CD4-positive, alpha-beta memory T cell (primary cell): ENCODE measurements at regions of chr9 and their contacts with region 1.

Region 1: DNA sequence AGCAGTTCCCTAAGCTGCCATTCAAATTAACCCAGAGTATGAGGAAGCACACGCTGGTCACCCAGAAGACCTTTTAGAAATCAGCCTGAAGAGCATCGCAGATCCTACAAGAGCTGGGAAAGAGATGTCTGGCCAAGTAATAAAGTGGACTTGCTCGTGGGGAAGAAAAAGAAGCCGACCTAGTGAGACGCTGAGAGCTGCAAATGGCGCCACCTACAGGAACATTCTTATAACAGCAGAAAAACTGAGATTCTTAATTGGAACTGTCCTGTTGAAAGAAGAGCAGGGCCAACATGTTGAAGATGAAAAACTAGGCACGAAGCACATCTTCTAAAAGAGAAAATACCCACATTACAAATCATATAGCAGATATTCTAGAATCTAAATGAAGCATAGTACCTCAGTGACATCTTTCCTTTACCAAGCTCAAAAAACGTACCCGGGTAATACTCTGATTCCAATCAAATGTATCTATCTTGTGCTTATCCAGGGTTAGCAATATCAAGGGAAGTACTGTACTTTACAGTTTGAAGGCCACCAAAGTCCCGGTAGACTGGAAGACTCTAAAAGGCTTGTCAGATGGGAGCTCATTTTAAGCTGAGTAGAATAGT is 3.9 kb upstream of the GNAQ start:
- DNase-seq: peak; percentile 61 to 75 (median 72)
- H3K4me3 ChIP-seq: no peak overlapping the region
- H3K4me3 Mint-ChIP-seq: peak overlapping the region in 4 of 8 donors; percentile 20 to 62 (median 34)
- H3K27ac ChIP-seq: no peak overlapping the region
- H3K27ac Mint-ChIP-seq: peak overlapping the region; percentile 6 to 91 (median 70)
- H3K4me1 ChIP-seq: peaks cover 34% of the 10 kb centered on the region
- H3K4me1 Mint-ChIP-seq: peaks cover 28 to 39% (median 33%) of the 10 kb centered on the region in 4 donors
- H3K27me3 ChIP-seq: no peaks in the 10 kb centered on the region
- H3K27me3 Mint-ChIP-seq: no peaks in the 10 kb centered on the region

Region 2: GRCh38 chr9:76032038-76032796 is 2003.3 kb before region 1 on chr9:
- CTCF ChIA-PET with region 1: no interaction called
- POLR2A ChIA-PET with region 1: no interaction called
- intact Hi-C with region 1: no loop called
- DNase-seq: no peak
- H3K4me3 ChIP-seq: no peak overlapping the region
- H3K4me3 Mint-ChIP-seq: peak overlapping the region in 5 of 8 donors; percentile 0 to 53 (median 32)
- H3K27ac ChIP-seq: no peak overlapping the region
- H3K27ac Mint-ChIP-seq: peak overlapping the region in 6 of 7 donors; percentile 0 to 68 (median 25)
- H3K4me1 ChIP-seq: peaks cover 33% of the 10 kb centered on the region
- H3K4me1 Mint-ChIP-seq: peaks cover 28 to 41% (median 33%) of the 10 kb centered on the region in 4 donors
- H3K27me3 ChIP-seq: no peaks in the 10 kb centered on the region
- H3K27me3 Mint-ChIP-seq: no peaks in the 10 kb centered on the region

Region 3: GRCh38 chr9:77433675-77434445 is 601.6 kb before region 1 on chr9:
- CTCF ChIA-PET with region 1: interaction called, 5 read pairs
- POLR2A ChIA-PET with region 1: no interaction called
- intact Hi-C with region 1: loop called (anchors 1 kb)
- DNase-seq: peak; percentile 35 to 42 (median 39)
- H3K4me3 ChIP-seq: no peak overlapping the region
- H3K4me3 Mint-ChIP-seq: peak overlapping the region in 3 of 8 donors; percentile 19 to 70 (median 39)
- H3K27ac ChIP-seq: no peak overlapping the region
- H3K27ac Mint-ChIP-seq: peak overlapping the region in 2 of 7 donors; percentile 30 to 77
- H3K4me1 ChIP-seq: no peaks in the 10 kb centered on the region
- H3K4me1 Mint-ChIP-seq: peaks cover 1 to 5% (median 4%) of the 10 kb centered on the region in 4 donors
- H3K27me3 ChIP-seq: no peaks in the 10 kb centered on the region
- H3K27me3 Mint-ChIP-seq: peaks cover 2 to 3% of the 10 kb centered on the region in 2 donors

Region 4: DNA sequence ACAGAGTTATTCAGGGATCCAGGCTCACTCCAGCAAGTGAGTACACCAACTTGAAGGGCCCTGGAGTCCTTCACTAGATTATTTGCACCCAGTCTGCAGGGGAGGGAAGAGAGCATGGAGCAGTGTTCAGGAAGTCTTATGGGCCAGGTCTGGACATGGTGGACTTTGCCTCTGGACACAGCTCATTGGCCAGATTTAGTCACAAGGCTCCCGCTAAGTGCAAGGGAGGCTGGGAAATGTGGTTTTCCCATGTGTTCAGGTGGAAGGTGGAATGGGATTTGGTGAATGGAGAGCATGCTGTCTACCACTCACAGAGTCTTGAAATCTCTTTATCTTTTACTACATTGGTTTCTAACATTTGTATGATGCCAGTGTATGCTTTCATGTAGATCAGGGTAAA is 587.8 kb before region 1 on chr9:
- CTCF ChIA-PET with region 1: no interaction called
- POLR2A ChIA-PET with region 1: no interaction called
- intact Hi-C with region 1: no loop called
- DNase-seq: no peak
- H3K4me3 ChIP-seq: no peak overlapping the region
- H3K4me3 Mint-ChIP-seq: no peak overlapping the region
- H3K27ac ChIP-seq: no peak overlapping the region
- H3K27ac Mint-ChIP-seq: no peak overlapping the region
- H3K4me1 ChIP-seq: no peaks in the 10 kb centered on the region
- H3K4me1 Mint-ChIP-seq: no peaks in the 10 kb centered on the region
- H3K27me3 ChIP-seq: no peaks in the 10 kb centered on the region
- H3K27me3 Mint-ChIP-seq: peaks cover 7 to 9% of the 10 kb centered on the region in 2 donors

Region 5: DNA sequence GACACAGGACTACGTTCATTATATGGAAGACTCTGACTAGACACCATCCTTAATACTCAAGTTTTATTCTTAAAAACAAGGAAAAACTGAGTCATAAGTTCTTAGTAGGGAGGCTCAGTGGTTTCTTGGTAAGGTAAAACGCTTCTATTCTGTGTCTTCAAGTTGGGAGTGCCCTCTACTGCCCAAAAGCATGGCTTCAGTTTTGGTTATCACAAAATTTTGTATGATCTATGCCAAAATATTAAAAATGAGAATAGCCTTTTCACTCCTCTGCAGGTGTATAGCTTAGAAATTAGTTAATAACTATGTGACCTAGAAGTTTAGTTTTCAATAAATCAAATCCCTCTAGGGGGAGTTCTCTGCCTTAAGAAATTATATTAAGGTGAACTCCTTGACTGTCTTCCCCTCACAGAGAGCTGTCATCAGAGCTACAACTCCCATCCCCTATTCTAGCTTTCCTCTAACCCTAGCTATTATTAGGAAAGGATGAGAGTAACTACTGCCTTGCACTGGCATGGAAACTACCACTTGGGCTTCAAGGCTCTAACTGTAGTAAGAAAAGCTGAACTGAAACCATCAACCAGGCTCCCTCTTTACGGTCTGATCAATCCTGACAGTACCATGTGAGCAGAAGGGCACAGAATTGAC is 193.6 kb before region 1 on chr9:
- CTCF ChIA-PET with region 1: interaction called, 21 read pairs
- POLR2A ChIA-PET with region 1: no interaction called
- intact Hi-C with region 1: loop called (anchors 2 kb)
- DNase-seq: peak in 2 of 5 donors; percentile 3 to 9
- H3K4me3 ChIP-seq: no peak overlapping the region
- H3K4me3 Mint-ChIP-seq: no peak overlapping the region
- H3K27ac ChIP-seq: no peak overlapping the region
- H3K27ac Mint-ChIP-seq: peak overlapping the region in 2 of 7 donors; percentile 13 to 39
- H3K4me1 ChIP-seq: no peaks in the 10 kb centered on the region
- H3K4me1 Mint-ChIP-seq: peaks cover 7 to 23% (median 10%) of the 10 kb centered on the region in 4 donors
- H3K27me3 ChIP-seq: no peaks in the 10 kb centered on the region
- H3K27me3 Mint-ChIP-seq: no peaks in the 10 kb centered on the region

Region 6: GRCh38 chr9:77864211-77864889 is 171.1 kb before region 1 on chr9:
- CTCF ChIA-PET with region 1: no interaction called
- POLR2A ChIA-PET with region 1: no interaction called
- intact Hi-C with region 1: no loop called
- DNase-seq: no peak
- H3K4me3 ChIP-seq: no peak overlapping the region
- H3K4me3 Mint-ChIP-seq: no peak overlapping the region
- H3K27ac ChIP-seq: no peak overlapping the region
- H3K27ac Mint-ChIP-seq: peak overlapping the region in 2 of 7 donors; percentile 5 to 10
- H3K4me1 ChIP-seq: no peaks in the 10 kb centered on the region
- H3K4me1 Mint-ChIP-seq: peaks cover 5 to 32% (median 8%) of the 10 kb centered on the region in 4 donors
- H3K27me3 ChIP-seq: no peaks in the 10 kb centered on the region
- H3K27me3 Mint-ChIP-seq: no peaks in the 10 kb centered on the region

Region 7: DNA sequence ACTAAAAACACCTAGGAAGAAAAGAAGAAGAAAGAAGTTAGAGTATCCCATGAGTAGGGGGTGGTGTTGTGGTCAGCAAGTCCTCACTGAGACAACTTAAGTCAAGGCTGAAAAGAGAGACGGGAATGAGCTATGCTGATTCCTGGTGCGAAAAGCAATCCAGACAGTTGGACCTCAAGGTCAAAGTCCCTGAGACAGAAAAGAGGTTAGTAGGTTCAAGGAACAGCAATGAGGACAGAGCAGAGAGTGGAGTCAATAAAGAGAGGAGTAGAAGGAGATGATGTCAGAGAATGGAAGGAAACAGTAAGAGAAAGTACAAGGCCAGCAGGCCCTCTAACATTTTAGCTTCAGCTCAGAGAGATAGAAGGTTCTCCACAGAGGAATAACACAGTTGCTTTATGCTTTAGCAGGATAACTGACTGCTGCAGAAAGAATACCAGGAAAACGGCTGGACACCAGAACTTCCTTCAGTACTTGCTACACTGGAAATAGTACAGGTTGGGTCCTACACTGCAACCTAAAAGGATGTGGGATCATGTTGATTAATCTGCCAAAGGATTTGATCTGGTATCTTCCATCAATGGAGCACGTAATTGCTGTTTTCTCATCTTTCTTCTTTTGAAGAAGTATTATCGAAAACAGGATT is 47.5 kb before region 1 on chr9:
- CTCF ChIA-PET with region 1: interaction called, 12 read pairs
- POLR2A ChIA-PET with region 1: interaction called, 3 read pairs
- intact Hi-C with region 1: no loop called
- DNase-seq: no peak
- H3K4me3 ChIP-seq: no peak overlapping the region
- H3K4me3 Mint-ChIP-seq: no peak overlapping the region
- H3K27ac ChIP-seq: no peak overlapping the region
- H3K27ac Mint-ChIP-seq: peak overlapping the region in 5 of 7 donors; percentile 2 to 80 (median 48)
- H3K4me1 ChIP-seq: peaks cover 13% of the 10 kb centered on the region
- H3K4me1 Mint-ChIP-seq: peaks cover 41 to 72% (median 50%) of the 10 kb centered on the region in 4 donors
- H3K27me3 ChIP-seq: no peaks in the 10 kb centered on the region
- H3K27me3 Mint-ChIP-seq: no peaks in the 10 kb centered on the region

Region 8: GRCh38 chr9:78046112-78046511 is 10.6 kb after region 1 on chr9:
- CTCF ChIA-PET with region 1: interaction called, 40 read pairs
- POLR2A ChIA-PET with region 1: interaction called, 6 read pairs
- intact Hi-C with region 1: no loop called
- DNase-seq: no peak
- H3K4me3 ChIP-seq: no peak overlapping the region
- H3K4me3 Mint-ChIP-seq: no peak overlapping the region
- H3K27ac ChIP-seq: no peak overlapping the region
- H3K27ac Mint-ChIP-seq: no peak overlapping the region
- H3K4me1 ChIP-seq: no peaks in the 10 kb centered on the region
- H3K4me1 Mint-ChIP-seq: no peaks in the 10 kb centered on the region
- H3K27me3 ChIP-seq: no peaks in the 10 kb centered on the region
- H3K27me3 Mint-ChIP-seq: peaks cover 0 to 6% of the 10 kb centered on the region in 2 donors

Region 9: GRCh38 chr9:78103971-78104433 is 68.5 kb after region 1 on chr9:
- CTCF ChIA-PET with region 1: interaction called, 13 read pairs
- POLR2A ChIA-PET with region 1: interaction called, 3 read pairs
- intact Hi-C with region 1: no loop called
- DNase-seq: peak in 4 of 5 donors; percentile 15 to 58 (median 41)
- H3K4me3 ChIP-seq: no peak overlapping the region
- H3K4me3 Mint-ChIP-seq: peak overlapping the region; percentile 2 to 73 (median 63)
- H3K27ac ChIP-seq: no peak overlapping the region
- H3K27ac Mint-ChIP-seq: peak overlapping the region in 5 of 7 donors; percentile 2 to 90 (median 73)
- H3K4me1 ChIP-seq: peaks cover 21% of the 10 kb centered on the region
- H3K4me1 Mint-ChIP-seq: peaks cover 24 to 52% (median 49%) of the 10 kb centered on the region in 4 donors
- H3K27me3 ChIP-seq: no peaks in the 10 kb centered on the region
- H3K27me3 Mint-ChIP-seq: no peaks in the 10 kb centered on the region

Region 10: GRCh38 chr9:78332381-78332780 is 296.9 kb after region 1 on chr9:
- CTCF ChIA-PET with region 1: no interaction called
- POLR2A ChIA-PET with region 1: no interaction called
- intact Hi-C with region 1: no loop called
- DNase-seq: no peak
- H3K4me3 ChIP-seq: no peak overlapping the region
- H3K4me3 Mint-ChIP-seq: no peak overlapping the region
- H3K27ac ChIP-seq: no peak overlapping the region
- H3K27ac Mint-ChIP-seq: no peak overlapping the region
- H3K4me1 ChIP-seq: no peaks in the 10 kb centered on the region
- H3K4me1 Mint-ChIP-seq: no peaks in the 10 kb centered on the region
- H3K27me3 ChIP-seq: no peaks in the 10 kb centered on the region
- H3K27me3 Mint-ChIP-seq: peaks cover 2 to 7% of the 10 kb centered on the region in 2 donors